ENCODE measurements at regions of chr5 and their contacts with region 1.

Region 1: GRCh38 chr5:16552666-16553343 is 64.0 kb downstream of the RETREG1 start:
- DNase-seq: peak; percentile 84
- H3K4me3 ChIP-seq: no peak overlapping the region
- H3K27ac ChIP-seq: no peak overlapping the region
- H3K4me1 ChIP-seq: no peaks in the 10 kb centered on the region
- H3K27me3 ChIP-seq: no peaks in the 10 kb centered on the region
- CTCF ChIP-seq: peak; percentile 32 to 65 (median 55)
- POLR2A ChIP-seq: no peak

Region 2: DNA sequence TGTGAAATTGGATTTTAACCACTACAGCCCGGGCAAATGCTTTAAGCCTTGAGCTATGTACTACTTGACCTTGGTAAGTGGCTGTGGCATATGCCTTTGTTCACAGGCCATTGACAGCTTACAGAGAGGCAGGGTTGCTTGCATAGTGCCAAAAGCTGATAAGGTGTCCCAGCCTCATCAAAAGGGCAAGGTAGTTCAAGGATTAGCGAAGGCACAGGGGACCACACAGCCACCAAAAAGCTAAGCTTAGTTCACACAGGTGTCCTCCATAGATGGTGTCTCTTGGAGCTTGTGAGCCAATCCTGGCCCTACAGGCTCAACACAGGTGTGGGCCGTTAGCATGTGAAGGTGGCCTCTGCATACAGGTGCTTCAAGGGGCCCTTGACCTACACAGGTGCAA is 174.0 kb before region 1 on chr5:
- intact Hi-C with region 1: no loop called
- DNase-seq: no peak
- H3K4me3 ChIP-seq: no peak overlapping the region
- H3K27ac ChIP-seq: no peak overlapping the region
- H3K4me1 ChIP-seq: no peaks in the 10 kb centered on the region
- H3K27me3 ChIP-seq: no peaks in the 10 kb centered on the region
- CTCF ChIP-seq: no peak
- POLR2A ChIP-seq: no peak

Region 3: DNA sequence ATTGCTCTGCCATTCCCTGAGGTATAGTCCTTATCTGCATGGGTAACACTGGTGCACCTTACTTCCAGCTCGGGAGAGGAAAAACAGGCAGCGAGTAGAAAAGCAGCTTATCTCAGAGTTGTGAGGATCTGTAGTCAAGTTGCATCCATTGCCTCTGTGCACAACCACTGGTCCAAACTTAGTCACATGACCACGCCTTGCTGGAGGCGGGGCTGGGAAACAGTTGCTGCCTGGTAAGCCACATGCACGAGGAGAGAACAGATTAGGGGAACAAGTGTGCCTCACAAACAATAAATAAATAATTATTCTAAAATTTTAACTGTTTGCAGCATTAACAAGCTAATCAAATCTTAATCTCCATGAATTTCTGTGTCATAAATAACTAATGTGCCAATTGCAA is 105.8 kb before region 1 on chr5:
- intact Hi-C with region 1: no loop called
- DNase-seq: no peak
- H3K4me3 ChIP-seq: no peak overlapping the region
- H3K27ac ChIP-seq: no peak overlapping the region
- H3K4me1 ChIP-seq: no peaks in the 10 kb centered on the region
- H3K27me3 ChIP-seq: no peaks in the 10 kb centered on the region
- CTCF ChIP-seq: no peak
- POLR2A ChIP-seq: no peak

Region 4: DNA sequence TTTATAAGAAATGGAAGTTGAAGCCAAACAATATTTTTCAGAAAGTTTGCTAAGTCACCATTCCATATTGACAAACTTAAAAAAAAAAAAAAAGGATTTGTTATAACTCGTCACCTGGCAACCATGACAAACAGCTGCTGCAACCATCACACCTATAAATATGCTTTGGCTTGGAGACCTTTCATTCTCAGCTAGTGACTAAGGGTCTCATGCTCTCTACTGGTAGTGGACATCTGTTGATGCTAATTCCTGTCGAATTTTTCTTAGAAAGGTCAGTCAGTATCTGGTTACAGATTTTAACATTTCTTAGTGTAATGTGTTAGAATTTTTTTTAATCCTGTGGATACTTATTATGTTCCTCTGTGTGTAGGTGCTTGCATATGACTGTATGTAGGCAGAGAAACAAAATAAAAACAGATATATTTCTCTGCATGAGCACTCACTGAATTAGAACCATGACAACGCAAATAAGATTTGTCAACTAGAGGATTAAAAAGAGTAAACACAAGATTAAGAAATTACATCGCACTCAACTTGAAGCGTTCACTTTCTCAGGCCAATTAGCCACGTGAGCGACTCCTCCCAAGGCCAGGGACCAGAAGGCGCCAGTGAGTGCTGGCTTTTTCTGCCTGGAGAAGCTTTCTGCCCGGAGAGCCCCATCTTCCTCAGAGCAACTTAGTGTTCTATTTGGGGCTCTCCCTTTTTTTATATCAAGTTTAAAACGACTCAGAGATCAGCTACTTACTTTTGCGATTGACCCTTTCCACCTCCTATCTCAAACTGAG is 60.2 kb before region 1 on chr5:
- intact Hi-C with region 1: loop called (anchors 10 kb)
- DNase-seq: peak; percentile 77
- H3K4me3 ChIP-seq: no peak overlapping the region
- H3K27ac ChIP-seq: no peak overlapping the region
- H3K4me1 ChIP-seq: peaks cover 13% of the 10 kb centered on the region
- H3K27me3 ChIP-seq: no peaks in the 10 kb centered on the region
- CTCF ChIP-seq: no peak
- POLR2A ChIP-seq: no peak

Region 5: GRCh38 chr5:16508730-16509531 is 43.9 kb before region 1 on chr5:
- intact Hi-C with region 1: no loop called
- DNase-seq: peak; percentile 19
- H3K4me3 ChIP-seq: no peak overlapping the region
- H3K27ac ChIP-seq: no peak overlapping the region
- H3K4me1 ChIP-seq: peaks cover 13% of the 10 kb centered on the region
- H3K27me3 ChIP-seq: no peaks in the 10 kb centered on the region
- CTCF ChIP-seq: no peak
- POLR2A ChIP-seq: no peak